PC-9 (cell line): ENCODE measurements at regions of chr12 and their contacts with region 1.

Region 1: DNA sequence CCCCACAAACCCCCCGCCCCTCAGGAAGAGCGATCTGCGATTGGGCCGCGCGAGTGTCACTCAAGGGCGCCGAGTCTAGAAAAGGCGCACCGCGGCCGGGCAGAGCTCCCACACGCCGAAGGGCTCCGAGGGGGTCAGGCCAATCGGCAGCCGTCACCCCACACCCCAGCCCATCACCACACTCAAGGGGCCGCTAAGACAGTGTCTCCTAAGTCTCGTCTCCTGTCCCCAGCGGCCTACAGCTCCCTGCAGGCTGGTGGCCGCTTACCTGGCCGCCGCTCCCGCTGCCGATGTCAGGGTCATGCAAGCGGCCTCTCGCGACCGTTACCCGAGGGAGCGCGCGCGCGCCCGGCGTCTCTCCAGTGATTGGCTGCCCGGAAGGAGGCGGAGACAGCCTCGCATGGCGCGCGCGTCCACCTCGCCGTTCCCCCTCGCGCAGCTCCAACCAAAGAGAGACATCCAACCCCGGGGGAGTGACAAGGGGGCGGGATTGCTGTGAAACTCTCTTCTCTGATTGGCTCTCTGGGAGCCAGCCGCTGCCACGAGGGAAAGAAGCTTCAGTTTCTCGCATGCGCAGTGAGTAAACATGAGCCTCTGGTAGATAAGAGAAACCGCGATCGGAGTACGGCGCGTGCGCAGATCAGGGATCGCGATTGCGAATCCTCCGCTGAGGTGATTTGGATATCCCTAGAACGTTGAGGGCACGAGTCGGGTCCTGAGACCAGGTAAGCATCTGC is at the starts of genes MPHOSPH9 and MTRFR:
- DNase-seq: peak; percentile 98
- H3K4me3 ChIP-seq: peak within 1 kb of the TSS; percentile 82
- H3K27ac ChIP-seq: peak within 1 kb of the TSS; percentile 32
- H3K4me1 ChIP-seq: peaks cover 23% of the 10 kb centered on the region
- H3K27me3 ChIP-seq: no peaks in the 10 kb centered on the region
- CTCF ChIP-seq: no peak
- total RNA-seq, gene MPHOSPH9: 46.9 and 58.5 TPM in 2 replicates
- total RNA-seq, gene MTRFR: 18.6 and 19.4 TPM in 2 replicates

Region 2: GRCh38 chr12:122767691-122768090 is 465.3 kb before region 1 on chr12:
- CTCF ChIA-PET with region 1: no interaction called
- POLR2A ChIA-PET with region 1: no interaction called
- intact Hi-C with region 1: loop called (anchors 10 kb)
- DNase-seq: no peak
- H3K4me3 ChIP-seq: no peak overlapping the region
- H3K27ac ChIP-seq: no peak overlapping the region
- H3K4me1 ChIP-seq: no peaks in the 10 kb centered on the region
- H3K27me3 ChIP-seq: no peaks in the 10 kb centered on the region
- CTCF ChIP-seq: no peak

Region 3: DNA sequence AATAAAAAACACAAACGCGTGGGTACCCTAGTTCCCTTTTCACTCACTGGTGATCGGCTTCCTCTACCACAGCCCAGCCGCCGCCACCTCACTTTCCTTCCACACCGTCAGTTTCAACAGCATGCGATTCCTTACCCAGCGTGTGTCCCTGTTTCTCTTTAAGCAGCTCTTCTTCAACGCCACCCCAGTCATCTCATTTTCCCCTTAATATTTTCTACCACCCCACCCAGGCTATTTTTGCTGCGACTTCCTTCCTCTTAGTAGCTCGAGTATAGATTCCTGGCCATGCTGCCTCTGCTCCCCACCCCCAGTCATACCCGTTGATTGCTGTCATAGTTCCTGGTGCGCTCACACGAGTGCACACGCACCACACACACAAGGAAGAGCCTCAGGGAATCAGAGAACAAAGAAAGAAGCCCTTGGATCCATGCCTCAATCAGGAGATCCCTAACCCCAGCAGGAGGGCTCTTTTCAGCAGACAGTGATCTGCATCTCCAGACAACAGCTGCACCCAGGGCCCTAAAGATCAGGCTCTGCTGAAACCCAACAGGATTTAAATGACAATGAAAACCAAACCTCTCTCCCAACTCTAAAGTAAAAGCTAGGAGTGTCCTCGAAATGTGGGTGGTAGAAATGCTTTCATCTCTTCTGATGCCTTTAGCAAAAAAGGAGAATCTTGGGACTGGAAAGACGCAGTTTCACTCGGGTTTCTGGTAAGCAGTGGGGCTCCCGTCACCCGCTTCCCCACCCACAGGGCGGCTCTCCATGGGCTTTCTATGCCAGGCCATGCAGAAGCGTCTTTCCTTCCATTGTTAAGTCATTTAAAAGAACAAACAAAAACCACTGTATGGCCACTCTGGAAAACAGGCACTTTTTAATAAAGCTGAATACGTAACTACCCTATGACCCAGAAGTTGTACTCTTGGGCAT is 360.9 kb before region 1 on chr12:
- CTCF ChIA-PET with region 1: no interaction called
- POLR2A ChIA-PET with region 1: interaction called, 19 read pairs
- intact Hi-C with region 1: no loop called
- DNase-seq: peak; percentile 66 to 75
- H3K4me3 ChIP-seq: no peak overlapping the region
- H3K27ac ChIP-seq: peak overlapping the region; percentile 28; the same call in 1 of the 2 replicates
- H3K4me1 ChIP-seq: no peaks in the 10 kb centered on the region
- H3K27me3 ChIP-seq: no peaks in the 10 kb centered on the region
- CTCF ChIP-seq: no peak

Region 4: DNA sequence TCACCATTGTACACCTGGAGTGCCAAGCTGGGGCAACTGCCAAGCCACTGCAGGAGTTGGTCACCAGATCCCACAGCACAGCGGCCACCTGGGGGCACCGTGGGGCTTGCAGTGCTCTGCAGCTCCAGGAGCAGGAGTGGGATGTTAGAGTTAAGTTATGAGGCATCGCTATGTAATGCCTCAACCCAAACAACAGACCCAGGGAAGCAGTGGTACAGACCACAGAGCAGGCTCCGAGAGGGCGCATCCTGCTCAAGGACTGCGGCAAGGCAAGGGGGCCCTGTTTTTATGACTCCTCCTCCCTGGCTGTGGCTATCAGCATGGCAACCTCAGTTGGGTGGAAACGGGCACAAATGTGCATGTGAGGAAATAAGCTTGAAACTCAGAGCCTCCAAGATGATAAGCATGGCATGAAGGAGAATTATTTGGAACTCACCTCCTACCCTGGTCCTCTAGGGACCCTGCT is 189.4 kb before region 1 on chr12:
- CTCF ChIA-PET with region 1: interaction called, 15 read pairs
- POLR2A ChIA-PET with region 1: interaction called, 5 read pairs
- intact Hi-C with region 1: loop called (anchors 1 kb)
- DNase-seq: peak; percentile 48 to 82
- H3K4me3 ChIP-seq: no peak overlapping the region
- H3K27ac ChIP-seq: no peak overlapping the region
- H3K4me1 ChIP-seq: no peaks in the 10 kb centered on the region
- H3K27me3 ChIP-seq: no peaks in the 10 kb centered on the region
- CTCF ChIP-seq: peak; percentile 71

Region 5: DNA sequence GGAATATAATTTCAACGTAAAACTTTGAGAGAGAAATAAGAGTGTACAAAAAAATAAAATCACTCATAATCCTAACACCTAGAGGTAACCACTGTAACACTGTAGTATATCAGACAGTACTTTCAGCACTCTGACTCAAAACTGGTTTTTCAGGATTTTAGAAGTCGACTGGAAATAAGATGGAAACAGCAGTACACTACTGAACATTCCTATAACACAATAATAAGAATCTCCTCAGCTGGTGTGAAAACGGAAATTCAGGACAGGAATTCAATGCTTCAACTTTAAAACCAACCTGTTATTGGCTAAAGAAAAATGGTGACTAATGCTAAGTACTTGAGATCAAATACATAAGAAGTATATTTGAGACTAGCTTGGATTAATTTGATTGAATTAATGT is 69.7 kb before region 1 on chr12:
- CTCF ChIA-PET with region 1: interaction called, 4 read pairs
- POLR2A ChIA-PET with region 1: no interaction called
- intact Hi-C with region 1: loop called (anchors 5 kb)
- DNase-seq: peak in 1 of 2 experiments; percentile 96
- H3K4me3 ChIP-seq: no peak overlapping the region
- H3K27ac ChIP-seq: peak overlapping the region; percentile 72
- H3K4me1 ChIP-seq: peaks cover 23% of the 10 kb centered on the region
- H3K27me3 ChIP-seq: no peaks in the 10 kb centered on the region
- CTCF ChIP-seq: no peak

Region 6: GRCh38 chr12:123263196-123263817 is 30.3 kb after region 1 on chr12:
- CTCF ChIA-PET with region 1: no interaction called
- POLR2A ChIA-PET with region 1: interaction called, 10 read pairs
- intact Hi-C with region 1: no loop called
- DNase-seq: no peak
- H3K4me3 ChIP-seq: no peak overlapping the region
- H3K27ac ChIP-seq: no peak overlapping the region
- H3K4me1 ChIP-seq: no peaks in the 10 kb centered on the region
- H3K27me3 ChIP-seq: no peaks in the 10 kb centered on the region
- CTCF ChIP-seq: no peak

Region 7: DNA sequence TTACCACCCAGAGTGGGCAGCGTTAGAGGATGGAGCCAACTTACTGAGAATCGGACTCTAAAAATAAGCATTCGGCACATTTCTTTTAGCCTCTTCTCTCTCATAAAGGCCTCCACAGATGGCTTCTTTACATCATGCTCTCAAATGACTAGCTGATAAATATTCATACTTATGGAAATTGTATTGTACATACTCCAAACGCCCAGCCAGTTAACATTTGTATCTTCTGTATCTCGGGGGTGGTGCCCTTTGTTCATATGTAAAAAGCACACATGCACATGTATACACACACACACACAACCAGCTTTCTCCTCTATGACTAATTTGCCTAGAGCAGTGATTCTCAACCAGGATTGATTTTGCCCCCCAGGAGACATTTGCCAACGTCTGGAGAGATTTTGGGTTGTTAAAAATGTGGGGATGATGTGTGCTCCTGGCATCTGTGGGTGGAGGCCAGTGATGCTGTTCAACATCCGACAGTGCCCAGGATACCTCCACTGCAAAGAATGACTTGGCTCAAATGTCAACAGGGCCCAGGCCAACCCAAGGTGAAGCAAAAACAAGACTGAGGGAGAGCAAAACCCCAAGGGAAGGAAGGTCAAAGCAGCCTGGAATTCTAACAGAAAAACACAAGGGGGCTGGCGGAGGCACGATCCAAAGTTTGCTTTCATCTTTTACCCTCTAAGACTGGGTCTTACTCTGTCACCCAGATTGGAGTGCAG is 53.8 kb after region 1 on chr12:
- CTCF ChIA-PET with region 1: no interaction called
- POLR2A ChIA-PET with region 1: no interaction called
- intact Hi-C with region 1: no loop called
- DNase-seq: no peak
- H3K4me3 ChIP-seq: no peak overlapping the region
- H3K27ac ChIP-seq: no peak overlapping the region
- H3K4me1 ChIP-seq: no peaks in the 10 kb centered on the region
- H3K27me3 ChIP-seq: no peaks in the 10 kb centered on the region
- CTCF ChIP-seq: no peak